Heart right ventricle (tissue), 16 donors: ENCODE measurements at regions of chr20 and their contacts with region 1.

Region 1: DNA sequence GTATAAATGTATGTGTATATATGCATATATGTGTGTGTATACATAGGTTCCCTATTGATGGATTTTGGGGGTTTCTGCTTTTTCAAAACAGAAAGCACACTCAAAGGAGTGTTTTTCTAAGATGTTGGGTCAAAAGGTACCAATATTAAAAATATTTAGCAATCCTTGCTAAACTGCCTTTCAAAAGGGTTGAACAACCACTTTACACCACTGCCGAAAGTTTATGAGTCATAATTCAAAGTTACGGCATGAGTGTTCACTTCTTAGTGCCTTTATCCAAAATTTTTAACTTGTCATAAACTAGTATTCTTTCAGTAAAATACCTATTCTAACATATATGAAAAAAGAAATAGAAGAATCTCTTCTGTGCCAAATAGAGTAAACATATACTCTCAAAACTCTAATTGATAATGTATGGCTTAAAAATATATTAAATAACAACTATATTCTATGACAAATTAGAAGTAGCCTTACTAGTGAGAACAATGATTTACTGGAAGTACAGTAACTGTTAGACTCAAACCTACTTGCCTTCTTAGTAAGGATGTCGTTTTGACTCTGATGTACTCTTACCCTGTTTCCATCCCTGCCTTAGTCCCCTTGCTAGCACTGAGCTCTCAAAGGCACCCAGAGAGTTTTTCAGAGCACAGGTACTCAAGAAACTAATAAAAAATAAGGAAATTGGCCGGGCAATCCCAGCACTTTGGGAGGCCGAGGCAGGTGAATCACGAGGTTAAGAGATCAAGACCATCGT is 136.1 kb downstream of the INSM1 start:
- DNase-seq: no peak
- ATAC-seq: no peak
- H3K4me3 ChIP-seq: no peak overlapping the region
- H3K27ac ChIP-seq: no peak overlapping the region
- H3K4me1 ChIP-seq: no peaks in the 10 kb centered on the region
- H3K27me3 ChIP-seq: no peaks in the 10 kb centered on the region
- CTCF ChIP-seq: no peak

Region 2: GRCh38 chr20:20435453-20435852 is 68.5 kb before region 1 on chr20:
- intact Hi-C with region 1: loop called in 1 of 10 experiments (anchors 5 kb)
- DNase-seq: no peak
- ATAC-seq: peak in 2 of 8 donors; percentile 51 to 61
- H3K4me3 ChIP-seq: no peak overlapping the region
- H3K27ac ChIP-seq: no peak overlapping the region
- H3K4me1 ChIP-seq: peaks cover 0 to 5% (median 0%) of the 10 kb centered on the region in 9 donors
- H3K27me3 ChIP-seq: no peaks in the 10 kb centered on the region
- CTCF ChIP-seq: peak in 2 of 9 donors; percentile 16 to 19